Naive thymus-derived CD4-positive, alpha-beta T cell (primary cell): ENCODE measurements at regions of chr9 and their contacts with region 1.

Region 1: DNA sequence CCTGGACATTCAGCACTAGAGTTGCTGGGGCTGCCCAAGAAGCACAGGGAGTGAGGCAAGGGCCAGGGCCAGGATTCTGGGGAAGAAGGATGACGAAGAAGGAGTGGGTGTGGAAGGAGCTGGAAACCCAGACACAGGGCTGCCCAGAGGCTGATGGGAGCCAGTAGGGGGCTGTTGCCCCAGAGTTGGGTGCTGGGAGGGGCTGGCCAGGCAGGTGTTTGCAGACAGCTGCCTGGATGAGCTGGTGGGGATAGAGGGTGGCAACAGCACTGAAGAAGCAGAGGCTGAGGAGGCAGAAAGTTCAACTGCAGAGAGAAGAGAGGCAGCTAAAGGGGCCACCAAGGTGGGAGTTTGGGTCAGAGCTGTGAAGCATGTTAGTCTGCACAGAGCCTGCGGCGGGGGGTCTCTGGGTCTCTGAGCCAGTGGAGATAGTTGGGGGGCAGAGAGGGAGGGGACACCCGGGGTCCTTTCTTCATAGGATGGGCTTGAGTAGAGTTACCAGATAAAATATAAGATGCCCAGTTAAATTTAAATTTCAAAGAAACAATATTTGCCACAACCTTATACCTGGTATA is 2.5 kb upstream of the AQP7 start:
- DNase-seq: no peak
- ATAC-seq: no peak
- H3K4me3 ChIP-seq: no peak overlapping the region
- H3K4me3 Mint-ChIP-seq: no peak overlapping the region
- H3K27ac ChIP-seq: no peak overlapping the region
- H3K27ac Mint-ChIP-seq: peak overlapping the region in 8 of 9 donors; percentile 12 to 82 (median 76)
- H3K4me1 ChIP-seq: no peaks in the 10 kb centered on the region
- H3K4me1 Mint-ChIP-seq: peaks cover 4 to 14% (median 10%) of the 10 kb centered on the region in 7 donors
- H3K27me3 ChIP-seq: no peaks in the 10 kb centered on the region
- H3K27me3 Mint-ChIP-seq: peaks cover 0 to 4% (median 0%) of the 10 kb centered on the region in 5 donors

Region 2: GRCh38 chr9:33437215-33437614 is 32.3 kb after region 1 on chr9:
- CTCF ChIA-PET with region 1: no interaction called
- POLR2A ChIA-PET with region 1: no interaction called
- intact Hi-C with region 1: no loop called
- DNase-seq: no peak
- ATAC-seq: no peak
- H3K4me3 ChIP-seq: no peak overlapping the region
- H3K4me3 Mint-ChIP-seq: peak overlapping the region in 1 of 10 donors; percentile 49
- H3K27ac ChIP-seq: no peak overlapping the region
- H3K27ac Mint-ChIP-seq: peak overlapping the region in 5 of 9 donors; percentile 38 to 89 (median 69)
- H3K4me1 ChIP-seq: no peaks in the 10 kb centered on the region
- H3K4me1 Mint-ChIP-seq: peaks cover 0 to 62% (median 10%) of the 10 kb centered on the region in 7 donors
- H3K27me3 ChIP-seq: no peaks in the 10 kb centered on the region
- H3K27me3 Mint-ChIP-seq: no peaks in the 10 kb centered on the region

Region 3: DNA sequence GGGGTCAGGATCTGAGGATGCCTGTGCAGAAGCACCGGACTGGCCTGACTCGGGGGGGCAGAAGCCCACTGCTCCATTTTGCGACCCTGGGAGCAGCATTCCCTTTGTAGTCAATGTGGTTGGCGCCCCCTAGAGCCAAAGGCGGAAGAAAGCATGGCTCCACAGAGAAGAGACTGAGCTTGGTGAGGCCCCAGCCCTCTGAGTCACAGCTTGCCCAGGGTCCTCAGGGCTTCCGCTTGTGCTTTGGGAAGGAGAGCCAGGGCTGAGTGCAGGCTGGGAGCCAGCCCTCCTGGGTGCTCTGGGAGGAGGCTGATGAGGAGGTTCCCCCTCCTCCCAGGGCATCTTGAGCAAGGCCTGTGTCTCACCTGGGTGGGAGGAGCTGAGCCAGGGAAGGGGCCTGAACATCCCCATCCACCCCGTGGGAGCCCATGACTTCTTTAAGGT is 48.0 kb after region 1 on chr9:
- CTCF ChIA-PET with region 1: interaction called, 134 read pairs
- POLR2A ChIA-PET with region 1: interaction called, 8 read pairs
- intact Hi-C with region 1: loop called in 1 of 2 experiments (anchors 1 kb)
- DNase-seq: peak in 4 of 9 donors; percentile 25 to 51 (median 40)
- ATAC-seq: peak; percentile 63
- H3K4me3 ChIP-seq: no peak overlapping the region
- H3K4me3 Mint-ChIP-seq: peak overlapping the region in 5 of 10 donors; percentile 25 to 67 (median 36)
- H3K27ac ChIP-seq: peak overlapping the region; percentile 37
- H3K27ac Mint-ChIP-seq: peak overlapping the region in 8 of 9 donors; percentile 59 to 95 (median 82)
- H3K4me1 ChIP-seq: peaks cover 39 to 56% of the 10 kb centered on the region in 2 donors
- H3K4me1 Mint-ChIP-seq: peaks cover 40 to 64% (median 56%) of the 10 kb centered on the region in 7 donors
- H3K27me3 ChIP-seq: no peaks in the 10 kb centered on the region
- H3K27me3 Mint-ChIP-seq: no peaks in the 10 kb centered on the region

Region 4: GRCh38 chr9:33473643-33474352 is 68.9 kb after region 1 on chr9 and contains the start of gene NOL6:
- CTCF ChIA-PET with region 1: interaction called, 75 read pairs
- POLR2A ChIA-PET with region 1: interaction called, 8 read pairs
- intact Hi-C with region 1: no loop called
- DNase-seq: peak; percentile 91 to 99 (median 98)
- ATAC-seq: peak; percentile 100
- H3K4me3 ChIP-seq: peak within 1 kb of the TSS; percentile 88
- H3K4me3 Mint-ChIP-seq: peak within 1 kb of the TSS; percentile 88 to 100 (median 97)
- H3K27ac ChIP-seq: peak within 1 kb of the TSS; percentile 78
- H3K27ac Mint-ChIP-seq: peak within 1 kb of the TSS; percentile 88 to 99 (median 96)
- H3K4me1 ChIP-seq: peaks cover 13 to 19% of the 10 kb centered on the region in 2 donors
- H3K4me1 Mint-ChIP-seq: peaks cover 9 to 38% (median 31%) of the 10 kb centered on the region in 7 donors
- H3K27me3 ChIP-seq: no peaks in the 10 kb centered on the region
- H3K27me3 Mint-ChIP-seq: no peaks in the 10 kb centered on the region
- total RNA-seq, gene NOL6: 34.0 to 48.0 (median 44.0) TPM

Region 5: GRCh38 chr9:33517373-33517772 is 112.5 kb after region 1 on chr9:
- CTCF ChIA-PET with region 1: interaction called, 5 read pairs
- POLR2A ChIA-PET with region 1: no interaction called
- intact Hi-C with region 1: loop called in 1 of 2 experiments (anchors 1 kb)
- DNase-seq: peak in 1 of 9 donors; percentile 22
- ATAC-seq: peak; percentile 46
- H3K4me3 ChIP-seq: no peak overlapping the region
- H3K4me3 Mint-ChIP-seq: no peak overlapping the region
- H3K27ac ChIP-seq: no peak overlapping the region
- H3K27ac Mint-ChIP-seq: no peak overlapping the region
- H3K4me1 ChIP-seq: no peaks in the 10 kb centered on the region
- H3K4me1 Mint-ChIP-seq: no peaks in the 10 kb centered on the region
- H3K27me3 ChIP-seq: peaks cover 0 to 4% of the 10 kb centered on the region in 2 donors
- H3K27me3 Mint-ChIP-seq: peaks cover 9 to 41% (median 16%) of the 10 kb centered on the region in 5 donors